ENCODE measurements at regions of chr20 and their contacts with region 1.

Region 1: GRCh38 chr20:53869466-53870258 is 200.7 kb downstream of the BCAS1 start:
- DNase-seq: peak; percentile 43 to 90 (median 74)
- ATAC-seq: peak; percentile 67
- H3K4me3 ChIP-seq: no peak overlapping the region
- H3K4me3 Mint-ChIP-seq: peak overlapping the region; percentile 33
- H3K27ac ChIP-seq: peak overlapping the region in 1 of 2 experiments; percentile 52
- H3K27ac Mint-ChIP-seq: peak overlapping the region; percentile 93
- H3K4me1 ChIP-seq: peaks cover 82% of the 10 kb centered on the region
- H3K4me1 Mint-ChIP-seq: peaks cover 75% of the 10 kb centered on the region
- H3K27me3 ChIP-seq: no peaks in the 10 kb centered on the region
- H3K27me3 Mint-ChIP-seq: no peaks in the 10 kb centered on the region
- CTCF ChIP-seq: peak; percentile 84

Region 2: DNA sequence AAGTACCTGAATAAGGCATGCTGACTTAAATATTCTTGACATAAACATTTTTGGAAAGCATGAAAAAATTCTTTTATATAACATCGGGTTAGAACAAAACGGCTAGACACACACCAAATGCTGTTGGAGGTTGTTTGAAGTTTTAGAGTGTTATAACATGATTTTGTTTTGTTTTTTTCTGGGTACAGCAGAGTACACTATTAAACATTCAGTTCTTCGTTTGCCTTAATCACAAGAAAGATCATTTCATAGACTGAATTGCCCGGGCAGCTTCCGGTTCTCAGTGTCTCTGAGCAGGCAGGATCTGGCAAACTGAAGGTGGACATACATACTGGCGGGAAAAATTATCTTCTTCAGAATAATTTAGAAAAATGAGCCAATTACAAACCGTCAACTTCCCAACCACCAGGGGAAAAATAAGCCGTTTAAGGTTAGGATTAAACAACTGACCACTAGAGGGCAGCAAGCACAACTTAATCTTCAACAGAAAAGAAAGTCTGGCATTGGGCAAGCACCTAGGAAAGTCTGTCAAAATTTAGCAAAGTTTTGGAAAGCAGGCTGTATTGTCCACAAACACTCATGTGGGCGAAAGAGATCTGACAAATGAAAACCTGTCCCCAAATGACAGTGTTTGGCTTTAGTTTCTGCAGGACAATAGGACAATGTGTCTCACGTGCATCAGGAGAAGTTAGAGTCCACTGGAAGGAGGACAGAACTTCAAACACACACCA is 291.0 kb before region 1 on chr20:
- CTCF ChIA-PET with region 1: interaction called, 11 read pairs
- POLR2A ChIA-PET with region 1: interaction called, 9 read pairs
- intact Hi-C with region 1: loop called (anchors 1 kb)
- DNase-seq: peak in 8 of 9 experiments; percentile 39 to 92 (median 63)
- ATAC-seq: peak; percentile 32
- H3K4me3 ChIP-seq: peak overlapping the region; percentile 50 to 58
- H3K4me3 Mint-ChIP-seq: peak overlapping the region; percentile 87
- H3K27ac ChIP-seq: peak overlapping the region; percentile 46 to 83
- H3K27ac Mint-ChIP-seq: peak overlapping the region; percentile 94
- H3K4me1 ChIP-seq: peaks cover 86% of the 10 kb centered on the region
- H3K4me1 Mint-ChIP-seq: peaks cover 89% of the 10 kb centered on the region
- H3K27me3 ChIP-seq: no peaks in the 10 kb centered on the region
- H3K27me3 Mint-ChIP-seq: no peaks in the 10 kb centered on the region
- CTCF ChIP-seq: peak; percentile 95

Region 3: DNA sequence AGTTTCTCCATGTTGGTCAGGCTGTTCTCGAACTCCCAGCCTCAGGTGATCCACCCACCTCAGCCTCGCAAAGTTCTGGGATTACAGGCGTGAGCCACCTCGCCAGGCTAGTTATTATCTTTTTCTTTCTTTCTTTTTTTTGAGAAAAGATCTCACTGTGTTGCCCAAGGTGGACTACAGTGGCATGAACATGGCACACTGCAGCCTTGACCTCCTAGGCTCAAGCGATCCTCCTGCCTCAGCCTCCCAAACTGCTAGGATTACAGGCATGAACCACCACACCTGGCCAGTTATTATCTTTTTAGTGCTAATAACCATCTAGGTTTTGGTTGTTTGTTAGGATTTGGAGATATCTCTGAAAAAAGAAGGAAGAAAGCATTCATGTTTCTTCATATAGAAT is 240.2 kb before region 1 on chr20:
- CTCF ChIA-PET with region 1: no interaction called
- POLR2A ChIA-PET with region 1: no interaction called
- intact Hi-C with region 1: no loop called
- DNase-seq: no peak
- ATAC-seq: no peak
- H3K4me3 ChIP-seq: no peak overlapping the region
- H3K4me3 Mint-ChIP-seq: no peak overlapping the region
- H3K27ac ChIP-seq: no peak overlapping the region
- H3K27ac Mint-ChIP-seq: no peak overlapping the region
- H3K4me1 ChIP-seq: peaks cover 4% of the 10 kb centered on the region
- H3K4me1 Mint-ChIP-seq: peaks cover 13% of the 10 kb centered on the region
- H3K27me3 ChIP-seq: no peaks in the 10 kb centered on the region
- H3K27me3 Mint-ChIP-seq: no peaks in the 10 kb centered on the region
- CTCF ChIP-seq: no peak

Region 4: DNA sequence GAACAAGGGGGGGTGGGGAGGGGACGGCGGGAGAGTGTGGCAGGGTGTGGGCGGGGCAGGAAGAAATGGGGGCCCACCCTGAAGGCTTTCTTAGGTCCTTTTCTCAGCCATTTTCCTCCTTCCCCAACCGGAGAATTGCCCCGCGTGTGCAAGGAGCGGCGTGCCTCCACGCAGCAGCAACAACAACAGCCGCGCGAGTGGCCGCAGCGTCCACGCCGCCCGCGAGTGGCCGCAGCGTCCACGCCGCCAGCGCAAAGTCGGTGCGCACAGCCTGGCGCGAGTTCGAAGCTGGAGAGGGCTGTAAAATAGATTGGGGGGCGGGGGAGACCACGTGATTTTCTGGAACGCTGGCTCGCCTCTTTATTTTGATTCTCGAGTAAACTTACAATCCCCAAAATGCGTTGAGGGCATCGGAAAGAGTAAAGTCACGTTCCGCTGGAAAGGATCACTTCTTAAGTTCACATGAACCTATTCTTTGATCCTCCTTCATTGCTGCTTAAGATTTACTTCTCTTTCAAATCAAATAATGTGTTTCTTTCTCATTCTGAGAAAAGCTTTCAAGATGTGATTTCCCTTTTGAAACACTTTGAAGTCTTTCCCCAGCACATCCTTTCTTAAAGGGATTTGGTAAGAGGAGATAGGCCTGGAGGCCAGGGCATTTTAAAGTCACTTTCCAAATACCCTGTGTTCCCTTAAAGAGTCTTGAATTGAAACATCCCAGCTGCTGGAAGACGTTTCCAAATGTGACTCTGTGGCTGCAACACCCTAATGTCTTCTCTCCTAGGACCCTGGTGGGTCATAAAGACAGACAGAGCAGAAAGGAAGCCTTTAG is 209.4 kb before region 1 on chr20:
- CTCF ChIA-PET with region 1: interaction called, 4 read pairs
- POLR2A ChIA-PET with region 1: interaction called, 8 read pairs
- intact Hi-C with region 1: loop called in 1 of 2 experiments (anchors 5 kb)
- DNase-seq: peak in 6 of 9 experiments; percentile 10 to 68 (median 44)
- ATAC-seq: peak; percentile 47
- H3K4me3 ChIP-seq: peak overlapping the region; percentile 45 to 61
- H3K4me3 Mint-ChIP-seq: peak overlapping the region; percentile 87
- H3K27ac ChIP-seq: peak overlapping the region; percentile 49 to 67
- H3K27ac Mint-ChIP-seq: peak overlapping the region; percentile 94
- H3K4me1 ChIP-seq: peaks cover 53% of the 10 kb centered on the region
- H3K4me1 Mint-ChIP-seq: peaks cover 62% of the 10 kb centered on the region
- H3K27me3 ChIP-seq: no peaks in the 10 kb centered on the region
- H3K27me3 Mint-ChIP-seq: no peaks in the 10 kb centered on the region
- CTCF ChIP-seq: no peak

Region 5: GRCh38 chr20:53813636-53814429 is 55.8 kb before region 1 on chr20:
- CTCF ChIA-PET with region 1: interaction called, 3 read pairs
- POLR2A ChIA-PET with region 1: interaction called, 3 read pairs
- intact Hi-C with region 1: loop called in 1 of 2 experiments (anchors 10 kb)
- DNase-seq: no peak
- ATAC-seq: no peak
- H3K4me3 ChIP-seq: no peak overlapping the region
- H3K4me3 Mint-ChIP-seq: peak overlapping the region; percentile 5
- H3K27ac ChIP-seq: peak overlapping the region in 1 of 2 experiments; percentile 46
- H3K27ac Mint-ChIP-seq: peak overlapping the region; percentile 37
- H3K4me1 ChIP-seq: peaks cover 21% of the 10 kb centered on the region
- H3K4me1 Mint-ChIP-seq: peaks cover 38% of the 10 kb centered on the region
- H3K27me3 ChIP-seq: no peaks in the 10 kb centered on the region
- H3K27me3 Mint-ChIP-seq: no peaks in the 10 kb centered on the region
- CTCF ChIP-seq: no peak

Region 6: DNA sequence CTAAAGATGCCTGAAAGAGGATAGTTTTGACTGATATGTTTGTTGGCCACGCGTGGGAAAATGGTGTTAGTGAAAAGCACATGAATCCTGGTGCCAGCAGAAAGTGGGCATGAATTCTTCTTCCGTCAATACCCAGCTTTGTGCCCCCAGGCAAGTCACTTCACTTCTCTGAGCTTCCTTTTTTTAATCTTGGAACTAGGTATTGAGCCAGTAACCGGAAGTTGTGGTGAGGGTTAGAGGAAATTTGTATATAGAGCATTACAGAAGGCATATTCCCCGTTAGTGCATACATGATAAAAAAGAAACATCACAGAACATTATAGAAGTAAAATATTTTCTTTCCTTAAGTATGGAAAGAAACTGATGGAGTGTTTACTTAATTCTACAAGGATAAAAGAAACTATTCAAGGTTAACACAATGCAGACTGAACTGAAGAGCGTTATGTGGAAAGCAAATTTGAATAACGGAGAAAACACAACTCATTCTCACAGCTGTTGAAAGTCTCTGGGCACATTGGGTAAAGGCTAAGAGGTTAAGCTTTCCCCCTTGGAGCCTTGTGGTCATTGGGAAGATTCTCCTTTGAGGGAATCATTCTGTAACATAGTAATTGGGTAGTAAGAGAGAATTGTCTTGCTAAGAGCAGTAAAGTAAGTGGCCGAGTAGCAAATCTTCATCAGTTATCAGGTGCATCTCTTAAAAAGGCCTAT is 22.4 kb before region 1 on chr20:
- CTCF ChIA-PET with region 1: interaction called, 10 read pairs
- POLR2A ChIA-PET with region 1: interaction called, 11 read pairs
- intact Hi-C with region 1: loop called in 1 of 2 experiments (anchors 2 kb)
- DNase-seq: peak in 2 of 9 experiments; percentile 41 to 69
- ATAC-seq: no peak
- H3K4me3 ChIP-seq: peak overlapping the region; percentile 16 to 30
- H3K4me3 Mint-ChIP-seq: peak overlapping the region; percentile 72
- H3K27ac ChIP-seq: peak overlapping the region in 1 of 2 experiments; percentile 29
- H3K27ac Mint-ChIP-seq: peak overlapping the region; percentile 84
- H3K4me1 ChIP-seq: peaks cover 64% of the 10 kb centered on the region
- H3K4me1 Mint-ChIP-seq: peaks cover 62% of the 10 kb centered on the region
- H3K27me3 ChIP-seq: no peaks in the 10 kb centered on the region
- H3K27me3 Mint-ChIP-seq: no peaks in the 10 kb centered on the region
- CTCF ChIP-seq: no peak

Region 7: GRCh38 chr20:53899351-53900167 is 29.9 kb after region 1 on chr20:
- CTCF ChIA-PET with region 1: interaction called, 14 read pairs
- POLR2A ChIA-PET with region 1: interaction called, 18 read pairs
- intact Hi-C with region 1: no loop called
- DNase-seq: peak; percentile 32 to 84 (median 70)
- ATAC-seq: peak; percentile 91
- H3K4me3 ChIP-seq: peak overlapping the region in 1 of 2 experiments; percentile 9
- H3K4me3 Mint-ChIP-seq: peak overlapping the region; percentile 36
- H3K27ac ChIP-seq: peak overlapping the region; percentile 14 to 51
- H3K27ac Mint-ChIP-seq: peak overlapping the region; percentile 91
- H3K4me1 ChIP-seq: peaks cover 43% of the 10 kb centered on the region
- H3K4me1 Mint-ChIP-seq: peaks cover 55% of the 10 kb centered on the region
- H3K27me3 ChIP-seq: no peaks in the 10 kb centered on the region
- H3K27me3 Mint-ChIP-seq: no peaks in the 10 kb centered on the region
- CTCF ChIP-seq: no peak

Measured in CD8-positive, alpha-beta T cell (primary cell).